CD8-positive, alpha-beta T cell (primary cell): ENCODE measurements at regions of chr2 and their contacts with region 1.

Region 1: DNA sequence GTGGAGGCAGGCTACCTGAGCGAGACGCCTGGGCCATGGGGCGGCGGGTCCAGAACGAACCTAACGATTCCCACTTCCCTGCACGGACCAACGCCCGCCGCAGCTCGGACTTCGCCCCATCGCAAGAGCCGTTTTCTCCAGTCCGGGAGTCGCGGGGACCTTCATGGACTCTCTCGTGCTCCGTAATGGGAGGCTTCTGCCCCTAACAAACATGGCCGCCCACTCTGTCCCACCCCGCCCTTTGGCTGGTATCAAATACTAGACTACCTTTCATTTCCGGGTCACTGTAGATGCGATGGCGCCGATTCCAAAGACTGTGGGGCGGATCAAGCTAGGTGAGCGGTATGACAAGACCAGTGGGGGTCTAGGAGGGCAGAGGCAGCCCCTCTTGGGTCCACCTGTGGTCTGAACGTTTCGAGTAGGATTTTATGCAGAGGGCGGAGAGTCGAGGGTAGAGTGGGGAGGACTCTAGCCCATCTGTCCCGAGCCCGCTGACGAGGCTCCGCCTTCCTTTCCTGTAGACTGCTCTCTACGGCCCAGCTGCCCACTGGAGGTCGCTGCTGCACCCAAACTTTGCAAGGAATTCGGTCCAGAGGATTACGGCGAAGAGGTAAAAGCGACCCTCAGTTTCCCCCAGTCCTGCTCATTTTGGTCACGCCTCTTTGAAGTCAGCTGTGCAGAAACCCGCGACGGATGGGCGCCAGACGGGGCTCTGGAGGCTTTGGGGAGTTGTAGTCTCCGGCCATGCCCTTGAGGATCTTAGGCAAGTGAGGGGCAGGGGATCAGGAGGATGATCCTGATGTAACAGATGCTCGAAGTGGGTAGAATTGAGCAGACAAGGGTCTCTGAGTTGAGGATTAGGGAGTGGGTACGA is at the starts of genes CCDC142 and TTC31:
- DNase-seq: peak; percentile 85 to 97 (median 94)
- ATAC-seq: peak; percentile 93
- H3K4me3 ChIP-seq: peak within 1 kb of the TSS; percentile 81 to 97
- H3K4me3 Mint-ChIP-seq: peak within 1 kb of the TSS; percentile 97
- H3K27ac ChIP-seq: peak within 1 kb of the TSS; percentile 88 to 90
- H3K27ac Mint-ChIP-seq: peak within 1 kb of the TSS; percentile 99
- H3K4me1 ChIP-seq: peaks cover 25% of the 10 kb centered on the region
- H3K4me1 Mint-ChIP-seq: peaks cover 42% of the 10 kb centered on the region
- H3K27me3 ChIP-seq: no peaks in the 10 kb centered on the region
- H3K27me3 Mint-ChIP-seq: no peaks in the 10 kb centered on the region
- CTCF ChIP-seq: peak; percentile 74
- total RNA-seq, gene CCDC142: 12.6 to 13.6 TPM
- total RNA-seq, gene TTC31: 25.9 to 30.8 TPM

Region 2: DNA sequence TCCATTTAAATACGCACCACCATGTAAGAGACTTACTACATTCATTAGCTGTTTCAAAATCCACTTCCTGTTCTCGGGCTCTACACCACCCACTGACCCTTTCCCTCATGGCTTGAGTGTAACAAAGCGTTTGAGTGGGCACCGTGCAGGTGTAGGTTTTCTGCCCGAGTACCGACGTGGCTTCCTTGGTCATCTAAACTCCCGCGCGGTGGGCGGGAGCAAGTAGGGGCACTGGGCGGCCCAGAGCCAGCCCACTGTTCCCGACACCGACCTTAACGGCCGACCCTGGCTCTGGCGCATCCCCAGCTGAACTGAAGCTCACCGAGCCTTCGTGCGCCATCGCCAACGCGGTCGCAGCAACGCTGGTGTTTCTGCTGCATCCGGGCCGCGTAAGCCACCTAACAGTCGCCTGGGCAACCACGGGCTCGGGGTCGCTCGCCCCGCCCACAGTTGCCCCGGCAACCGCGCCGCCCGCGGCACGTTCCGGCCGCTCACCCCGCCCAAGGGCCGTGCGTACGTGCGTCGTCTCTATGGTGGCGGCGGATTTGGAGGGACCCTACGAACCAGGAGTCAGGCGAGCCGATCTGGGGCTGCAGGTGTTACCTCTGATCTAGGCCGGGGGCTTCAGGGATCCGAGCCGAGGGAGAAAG is 61.7 kb before region 1 on chr2 and contains the starts of genes C2orf81 and WDR54:
- CTCF ChIA-PET with region 1: interaction called, 6 read pairs
- POLR2A ChIA-PET with region 1: interaction called, 13 read pairs
- intact Hi-C with region 1: loop called (anchors 1 to 5 kb)
- DNase-seq: peak; percentile 90 to 98 (median 95)
- ATAC-seq: peak; percentile 88
- H3K4me3 ChIP-seq: peak within 1 kb of the TSS; percentile 72 to 92
- H3K4me3 Mint-ChIP-seq: peak within 1 kb of the TSS; percentile 98
- H3K27ac ChIP-seq: peak within 1 kb of the TSS; percentile 96 to 97
- H3K27ac Mint-ChIP-seq: peak within 1 kb of the TSS; percentile 96
- H3K4me1 ChIP-seq: peaks cover 20% of the 10 kb centered on the region
- H3K4me1 Mint-ChIP-seq: peaks cover 17% of the 10 kb centered on the region
- H3K27me3 ChIP-seq: no peaks in the 10 kb centered on the region
- H3K27me3 Mint-ChIP-seq: no peaks in the 10 kb centered on the region
- CTCF ChIP-seq: no peak
- total RNA-seq, gene C2orf81: 0.75 to 1.8 TPM
- total RNA-seq, gene WDR54: 18.4 to 19.8 TPM

Region 3: DNA sequence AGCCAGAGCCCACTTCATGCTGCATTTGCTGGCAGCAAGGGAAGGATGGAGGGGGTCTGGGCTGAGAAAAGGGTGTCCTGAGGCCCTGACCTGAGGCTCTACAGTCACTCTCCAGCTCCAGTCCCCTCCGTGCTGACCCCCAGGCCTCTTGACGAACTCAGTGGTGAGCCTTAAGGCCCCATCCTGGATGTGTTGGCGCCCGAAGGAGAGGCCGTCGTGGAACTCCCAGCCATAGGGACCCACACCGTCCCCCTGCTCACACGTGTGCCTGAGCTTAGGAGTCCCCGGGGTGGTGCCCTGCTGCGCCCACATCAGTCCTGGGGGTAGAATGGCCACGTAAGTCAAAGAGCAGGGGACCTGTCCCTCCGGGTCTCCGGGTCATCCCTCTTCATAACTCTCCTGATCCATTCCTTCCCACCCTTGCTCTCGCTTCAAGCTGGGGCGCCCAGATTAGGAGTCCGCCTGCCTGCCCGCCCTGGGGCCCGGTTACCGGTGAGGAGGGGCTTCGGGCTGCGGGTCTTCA is 18.6 kb before region 1 on chr2:
- CTCF ChIA-PET with region 1: interaction called, 58 read pairs
- POLR2A ChIA-PET with region 1: interaction called, 107 read pairs
- intact Hi-C with region 1: no loop called
- DNase-seq: peak in 1 of 9 experiments; percentile 22
- ATAC-seq: no peak
- H3K4me3 ChIP-seq: peak overlapping the region; percentile 69 to 83
- H3K4me3 Mint-ChIP-seq: peak overlapping the region; percentile 96
- H3K27ac ChIP-seq: peak overlapping the region; percentile 77 to 91
- H3K27ac Mint-ChIP-seq: peak overlapping the region; percentile 62
- H3K4me1 ChIP-seq: peaks cover 18% of the 10 kb centered on the region
- H3K4me1 Mint-ChIP-seq: peaks cover 30% of the 10 kb centered on the region
- H3K27me3 ChIP-seq: no peaks in the 10 kb centered on the region
- H3K27me3 Mint-ChIP-seq: no peaks in the 10 kb centered on the region
- CTCF ChIP-seq: no peak

Region 4: DNA sequence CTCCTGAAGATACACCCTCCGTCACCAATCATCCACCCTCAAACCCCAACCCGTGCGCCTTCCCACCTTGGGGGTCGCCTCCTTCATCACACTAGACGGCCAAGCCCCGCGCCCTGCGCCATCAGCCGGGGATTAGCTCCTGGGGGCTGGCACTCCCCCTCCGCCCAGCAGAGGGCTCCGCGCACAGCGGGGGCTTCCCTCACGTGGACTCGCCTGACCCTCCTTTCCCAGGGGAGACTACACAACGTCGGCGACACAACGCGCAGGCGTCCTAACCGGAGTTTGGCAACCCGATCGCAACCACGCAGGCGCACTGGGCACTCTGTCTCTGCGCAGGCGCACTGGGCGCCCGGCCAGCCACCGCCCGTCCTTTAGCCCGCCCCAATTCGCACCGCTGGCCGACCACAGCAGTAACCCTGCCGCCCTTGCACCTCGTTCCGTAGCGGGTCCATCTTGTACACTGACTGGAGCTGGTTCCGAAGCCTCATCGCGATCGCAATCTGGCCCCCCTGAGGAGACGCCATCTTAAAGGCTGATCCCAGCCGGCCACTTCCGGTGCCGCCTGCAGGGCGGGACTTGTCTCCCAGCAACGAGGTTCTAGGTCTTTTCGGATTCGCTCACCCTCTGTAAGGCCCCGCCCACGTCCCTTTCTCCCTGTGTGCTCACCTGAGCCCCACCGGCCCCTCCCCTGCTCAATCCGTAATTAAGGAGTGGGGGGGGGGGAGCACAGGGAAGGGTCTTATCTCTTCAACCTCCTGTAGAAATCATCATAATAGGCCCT is 24.3 kb after region 1 on chr2 and contains the start of gene PCGF1:
- CTCF ChIA-PET with region 1: interaction called, 13 read pairs
- POLR2A ChIA-PET with region 1: interaction called, 3 read pairs
- intact Hi-C with region 1: loop called (anchors 1 to 2 kb)
- DNase-seq: peak; percentile 98 to 100 (median 99)
- ATAC-seq: peak; percentile 90
- H3K4me3 ChIP-seq: peak within 1 kb of the TSS; percentile 96 to 99
- H3K4me3 Mint-ChIP-seq: peak within 1 kb of the TSS; percentile 99
- H3K27ac ChIP-seq: peak within 1 kb of the TSS; percentile 85 to 100
- H3K27ac Mint-ChIP-seq: peak within 1 kb of the TSS; percentile 99
- H3K4me1 ChIP-seq: peaks cover 32% of the 10 kb centered on the region
- H3K4me1 Mint-ChIP-seq: peaks cover 54% of the 10 kb centered on the region
- H3K27me3 ChIP-seq: peaks cover 13 to 20% of the 10 kb centered on the region in 2 experiments
- H3K27me3 Mint-ChIP-seq: peaks cover 54% of the 10 kb centered on the region
- CTCF ChIP-seq: peak; percentile 3
- total RNA-seq, gene PCGF1: 18.6 to 22.9 TPM

Region 5: GRCh38 chr2:74573747-74574562 is 90.9 kb after region 1 on chr2:
- CTCF ChIA-PET with region 1: no interaction called
- POLR2A ChIA-PET with region 1: no interaction called
- intact Hi-C with region 1: loop called in 1 of 2 experiments (anchors 5 kb)
- DNase-seq: peak in 4 of 9 experiments; percentile 27 to 63 (median 45)
- ATAC-seq: peak; percentile 77
- H3K4me3 ChIP-seq: peak overlapping the region; percentile 0 to 3
- H3K4me3 Mint-ChIP-seq: peak overlapping the region; percentile 66
- H3K27ac ChIP-seq: peak overlapping the region in 1 of 2 experiments; percentile 47
- H3K27ac Mint-ChIP-seq: peak overlapping the region; percentile 75
- H3K4me1 ChIP-seq: peaks cover 14% of the 10 kb centered on the region
- H3K4me1 Mint-ChIP-seq: peaks cover 15% of the 10 kb centered on the region
- H3K27me3 ChIP-seq: no peaks in the 10 kb centered on the region
- H3K27me3 Mint-ChIP-seq: peaks cover 6% of the 10 kb centered on the region
- CTCF ChIP-seq: no peak

Region 6: GRCh38 chr2:74876081-74876886 is 393.2 kb after region 1 on chr2:
- CTCF ChIA-PET with region 1: no interaction called
- POLR2A ChIA-PET with region 1: no interaction called
- intact Hi-C with region 1: loop called (anchors 1 kb)
- DNase-seq: peak in 8 of 9 experiments; percentile 5 to 73 (median 42)
- ATAC-seq: peak; percentile 77
- H3K4me3 ChIP-seq: no peak overlapping the region
- H3K4me3 Mint-ChIP-seq: no peak overlapping the region
- H3K27ac ChIP-seq: no peak overlapping the region
- H3K27ac Mint-ChIP-seq: no peak overlapping the region
- H3K4me1 ChIP-seq: peaks cover 3% of the 10 kb centered on the region
- H3K4me1 Mint-ChIP-seq: peaks cover 4% of the 10 kb centered on the region
- H3K27me3 ChIP-seq: no peaks in the 10 kb centered on the region
- H3K27me3 Mint-ChIP-seq: no peaks in the 10 kb centered on the region
- CTCF ChIP-seq: peak; percentile 75

Region 7: GRCh38 chr2:74982577-74982976 is 499.5 kb after region 1 on chr2:
- CTCF ChIA-PET with region 1: no interaction called
- POLR2A ChIA-PET with region 1: no interaction called
- intact Hi-C with region 1: no loop called
- DNase-seq: no peak
- ATAC-seq: no peak
- H3K4me3 ChIP-seq: no peak overlapping the region
- H3K4me3 Mint-ChIP-seq: no peak overlapping the region
- H3K27ac ChIP-seq: no peak overlapping the region
- H3K27ac Mint-ChIP-seq: no peak overlapping the region
- H3K4me1 ChIP-seq: no peaks in the 10 kb centered on the region
- H3K4me1 Mint-ChIP-seq: peaks cover 10% of the 10 kb centered on the region
- H3K27me3 ChIP-seq: no peaks in the 10 kb centered on the region
- H3K27me3 Mint-ChIP-seq: no peaks in the 10 kb centered on the region
- CTCF ChIP-seq: no peak